Naive thymus-derived CD8-positive, alpha-beta T cell (primary cell): ENCODE measurements at regions of chr22 and their contacts with region 1.

Region 1: DNA sequence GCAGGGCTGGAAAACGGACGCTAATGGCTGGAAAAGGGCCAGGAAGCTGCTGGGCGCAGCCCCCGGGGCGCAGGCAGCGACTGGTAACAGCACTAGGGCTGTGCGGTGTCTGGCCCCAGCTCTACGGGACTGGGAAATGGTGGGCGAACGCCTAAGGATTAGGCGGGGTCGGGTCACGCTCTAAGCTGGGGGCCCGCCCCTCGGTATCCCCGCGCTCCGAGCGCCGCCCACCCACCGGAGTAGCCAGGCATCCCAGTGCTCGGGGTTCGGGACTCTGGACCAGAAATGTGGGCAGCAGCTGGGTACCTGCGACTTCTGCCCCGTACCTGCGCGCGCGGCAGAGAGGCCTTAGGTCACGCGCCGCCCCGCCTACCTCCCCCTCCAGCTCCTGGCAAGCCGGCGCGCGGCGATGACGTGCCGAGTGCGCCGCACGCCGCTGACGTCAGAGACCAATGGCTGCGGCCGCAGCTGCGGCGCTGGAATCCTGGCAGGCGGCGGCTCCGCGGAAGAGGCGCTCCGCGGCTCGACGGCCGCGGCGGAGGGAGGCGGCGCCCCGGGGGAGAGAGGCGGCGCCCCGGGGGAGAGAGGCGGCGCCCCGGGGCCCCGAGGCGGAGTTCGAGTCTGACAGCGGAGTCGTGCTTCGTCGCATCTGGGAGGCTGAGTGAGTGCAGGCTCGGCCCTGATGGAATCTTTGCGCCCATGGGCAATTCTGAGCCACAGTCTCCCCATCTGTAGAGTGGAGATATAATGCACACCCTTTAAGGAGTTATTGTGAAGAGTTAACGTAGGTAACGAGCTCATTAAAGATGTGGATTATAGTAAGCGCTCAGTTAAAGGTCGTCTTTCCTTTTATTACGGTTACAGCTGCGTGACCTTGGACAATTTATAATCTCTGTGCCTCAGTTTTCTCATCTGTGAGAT is at the starts of genes HPS4 and SRRD:
- DNase-seq: peak; percentile 89 to 96 (median 94)
- ATAC-seq: peak; percentile 80 to 83
- H3K4me3 Mint-ChIP-seq: peak within 1 kb of the TSS; percentile 90 to 97 (median 94)
- H3K27ac Mint-ChIP-seq: peak within 1 kb of the TSS; percentile 93 to 99 (median 98)
- H3K4me1 Mint-ChIP-seq: peaks cover 44 to 72% (median 69%) of the 10 kb centered on the region in 4 donors
- H3K27me3 Mint-ChIP-seq: no peaks in the 10 kb centered on the region
- polyA plus RNA-seq, gene HPS4: 10.5 to 18.4 (median 16.2) TPM
- polyA plus RNA-seq, gene SRRD: 17.1 to 27.0 (median 17.9) TPM

Region 2: DNA sequence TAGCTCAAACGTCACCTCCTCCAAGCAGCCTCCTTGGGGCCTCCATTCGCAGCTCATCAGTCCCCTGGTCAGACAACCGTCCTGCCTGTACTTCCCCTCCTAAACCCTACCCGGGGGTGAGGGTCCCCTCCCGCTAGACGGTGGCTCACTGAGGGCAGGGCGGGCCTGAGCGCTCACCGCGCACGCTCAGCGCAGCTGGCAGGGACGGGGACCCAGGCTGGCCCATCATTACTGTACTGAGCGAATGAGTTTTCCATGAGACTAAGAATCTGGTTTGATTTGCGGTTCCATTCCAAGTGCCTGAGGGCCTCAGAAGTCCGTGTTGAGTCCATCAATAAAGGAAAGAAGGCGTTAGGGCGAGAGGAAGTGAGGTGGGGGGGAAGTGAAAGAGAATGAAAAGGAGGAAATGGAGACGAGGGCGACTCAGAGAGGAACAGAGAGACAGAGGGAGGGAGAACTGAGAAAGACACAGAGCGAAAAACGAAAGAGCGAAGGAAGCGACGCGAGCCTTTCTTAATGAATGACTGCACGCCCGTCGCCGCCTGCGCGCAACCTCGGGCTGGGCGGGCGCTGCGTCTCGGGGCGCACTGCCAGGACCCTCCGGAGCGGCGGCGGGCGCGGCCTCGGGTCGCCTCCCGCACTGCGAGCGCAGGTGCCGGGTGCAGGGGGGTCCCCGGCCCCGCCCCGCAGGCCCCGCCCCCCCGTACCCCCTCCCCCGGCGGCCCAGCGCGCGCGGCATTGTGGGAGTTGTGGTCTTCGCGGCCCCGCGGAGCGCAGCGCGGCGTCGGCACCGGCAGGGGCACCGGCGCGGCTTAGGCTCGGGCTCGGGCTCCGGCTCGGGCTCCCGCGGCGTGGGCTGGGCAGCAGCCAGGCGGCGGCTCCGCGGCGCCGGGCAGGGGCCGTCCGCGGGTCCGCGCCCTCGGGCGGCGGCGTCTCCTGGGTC is 54.9 kb before region 1 on chr22 and contains the start of gene ASPHD2:
- POLR2A ChIA-PET with region 1: interaction called, 28 read pairs
- DNase-seq: peak; percentile 72 to 88 (median 84)
- ATAC-seq: peak; percentile 90 to 91
- H3K4me3 Mint-ChIP-seq: peak within 1 kb of the TSS; percentile 89 to 100 (median 96)
- H3K27ac Mint-ChIP-seq: peak within 1 kb of the TSS; percentile 98 to 100 (median 98)
- H3K4me1 Mint-ChIP-seq: peaks cover 10 to 49% (median 31%) of the 10 kb centered on the region in 4 donors
- H3K27me3 Mint-ChIP-seq: peaks cover 0 to 2% (median 0%) of the 10 kb centered on the region in 5 donors
- polyA plus RNA-seq, gene ASPHD2: 2.3 to 3.1 (median 2.5) TPM

Region 3: DNA sequence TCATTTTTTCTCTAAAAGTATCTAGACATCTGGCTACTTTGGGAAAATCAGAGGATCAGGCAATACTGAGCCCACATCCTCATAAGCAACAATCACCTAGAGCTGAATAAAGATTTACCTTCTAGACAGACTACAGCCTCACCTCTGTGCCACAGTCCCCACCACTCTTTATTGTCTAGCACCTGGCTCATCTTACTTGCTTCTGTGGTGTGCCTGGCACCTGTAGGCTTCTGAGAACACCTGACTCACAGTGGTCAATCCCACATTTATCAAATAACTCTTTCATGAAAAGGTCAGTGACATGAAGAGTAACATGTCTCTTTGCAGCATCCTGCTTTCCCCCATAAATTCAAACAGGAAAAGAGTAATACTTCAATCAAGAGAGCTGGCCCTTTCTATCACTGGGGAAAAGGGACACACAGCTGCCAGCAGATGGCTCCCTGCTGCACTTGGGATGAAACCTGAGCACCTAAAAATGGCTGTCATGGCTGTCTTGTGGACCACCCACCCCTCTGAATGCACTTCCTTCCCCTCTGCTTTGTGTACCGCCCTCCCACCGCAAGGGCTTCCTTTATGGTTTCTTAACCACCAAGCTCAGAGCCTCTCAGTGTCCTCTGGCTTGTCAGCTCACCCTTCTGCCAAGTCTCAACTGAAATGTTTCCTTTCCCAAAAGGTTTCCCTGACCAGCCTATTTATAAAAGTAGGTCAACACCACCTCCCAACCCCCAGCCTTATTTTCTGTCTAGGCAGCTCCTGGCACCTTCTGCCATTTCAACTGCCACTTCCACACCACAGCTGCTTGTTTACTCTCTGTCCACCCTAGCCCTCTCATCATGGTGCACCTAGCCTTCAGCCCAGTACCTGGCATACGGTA is 19.2 kb after region 1 on chr22:
- POLR2A ChIA-PET with region 1: interaction called, 14 read pairs
- DNase-seq: peak; percentile 43 to 88 (median 74)
- ATAC-seq: peak; percentile 98 to 99
- H3K4me3 Mint-ChIP-seq: peak overlapping the region; percentile 13 to 85 (median 68)
- H3K27ac Mint-ChIP-seq: peak overlapping the region; percentile 68 to 91 (median 87)
- H3K4me1 Mint-ChIP-seq: peaks cover 16 to 31% (median 22%) of the 10 kb centered on the region in 4 donors
- H3K27me3 Mint-ChIP-seq: no peaks in the 10 kb centered on the region

Region 4: DNA sequence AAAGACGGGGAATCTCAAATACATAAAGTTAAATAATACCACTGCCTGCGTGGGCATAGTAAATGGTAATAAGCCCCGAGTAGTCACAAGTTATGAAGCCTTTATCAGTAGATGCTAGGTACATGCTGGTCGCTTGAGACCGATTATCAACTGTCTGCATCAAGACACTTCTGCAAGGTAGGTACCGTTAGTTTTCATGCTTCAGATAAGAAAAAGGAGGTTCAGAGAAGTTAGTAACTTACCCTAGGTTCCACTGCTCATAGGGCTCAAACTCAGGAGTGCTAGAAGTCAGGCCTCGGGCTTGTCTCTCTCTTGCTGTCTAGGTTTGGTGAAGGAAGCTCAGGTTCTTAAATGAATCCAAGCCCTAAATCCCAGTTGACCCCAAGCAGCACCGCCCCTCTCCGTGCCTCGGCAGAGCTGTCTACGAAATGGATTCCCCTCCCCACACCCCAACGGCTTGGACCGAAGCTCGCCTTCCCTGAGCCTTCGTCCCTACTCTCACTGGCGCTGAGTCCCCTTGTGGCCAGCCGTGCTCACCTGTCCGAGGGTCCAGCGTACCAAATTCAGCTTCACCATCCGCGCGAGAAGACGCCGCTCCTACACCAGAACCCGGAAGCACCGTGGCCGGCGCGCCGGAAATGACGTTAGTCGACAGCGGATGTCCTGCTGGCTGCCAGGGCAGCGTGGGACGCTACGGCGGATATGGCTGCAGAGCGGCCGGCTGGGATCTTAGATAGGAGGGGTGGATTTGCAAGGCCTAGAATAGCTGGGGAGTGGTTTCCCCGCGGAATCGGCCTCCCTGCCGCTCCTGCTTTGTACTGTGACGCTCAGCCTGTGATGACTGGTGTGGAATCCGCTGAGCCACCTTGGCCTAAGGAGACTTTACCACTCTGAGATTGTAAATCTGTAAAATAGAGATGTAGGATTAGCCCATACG is 28.4 kb after region 1 on chr22 and contains the start of gene TFIP11:
- POLR2A ChIA-PET with region 1: interaction called, 25 read pairs
- DNase-seq: peak; percentile 80 to 94 (median 85)
- ATAC-seq: peak; percentile 95 to 97
- H3K4me3 Mint-ChIP-seq: peak within 1 kb of the TSS; percentile 95 to 100 (median 99)
- H3K27ac Mint-ChIP-seq: peak within 1 kb of the TSS; percentile 97 to 100 (median 99)
- H3K4me1 Mint-ChIP-seq: peaks cover 18 to 50% (median 44%) of the 10 kb centered on the region in 4 donors
- H3K27me3 Mint-ChIP-seq: no peaks in the 10 kb centered on the region
- polyA plus RNA-seq, gene TFIP11: 15.3 to 33.9 (median 22.3) TPM